H1 (cell line): ENCODE measurements at regions of chr4 and their contacts with region 1.

Region 1: DNA sequence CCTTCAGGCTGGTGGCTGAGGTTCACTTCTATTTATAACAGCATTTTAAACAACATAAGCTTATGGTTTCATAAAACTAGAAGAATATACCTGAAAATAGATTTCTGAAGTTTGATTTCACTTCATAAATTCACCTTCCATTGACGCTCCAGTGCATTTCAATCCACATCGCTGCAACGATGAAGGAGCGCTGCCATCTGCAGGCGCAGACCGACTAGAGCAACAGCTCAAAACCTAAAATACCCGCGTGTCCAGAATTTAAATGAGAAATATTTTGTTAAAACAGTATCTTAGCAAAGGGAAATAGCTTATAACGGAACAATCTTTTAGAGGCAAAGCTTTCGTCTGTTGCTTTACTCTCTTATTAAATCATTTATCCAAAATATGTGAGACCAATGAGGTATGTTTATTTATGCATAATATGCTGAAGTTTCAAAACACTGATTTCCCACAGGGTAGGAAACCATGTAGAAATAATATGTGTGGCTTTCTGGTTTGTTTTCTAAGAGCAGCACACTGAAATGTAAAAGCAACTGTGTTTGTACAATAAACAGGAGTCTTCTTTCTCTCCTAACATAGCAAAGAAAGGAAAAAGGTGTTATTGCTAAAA is 816.4 kb upstream of the FRG1 start:
- DNase-seq: no peak
- H3K4me3 ChIP-seq: no peak overlapping the region
- H3K27ac ChIP-seq: no peak overlapping the region
- H3K4me1 ChIP-seq: no peaks in the 10 kb centered on the region
- H3K27me3 ChIP-seq: no peaks in the 10 kb centered on the region
- CTCF ChIP-seq: peak; percentile 61 to 72 (median 69)
- EP300 ChIP-seq: no peak
- POLR2A ChIP-seq: no peak
- RAD21 ChIP-seq: peak; percentile 89 to 92

Region 2: GRCh38 chr4:188781655-188782054 is 342.6 kb before region 1 on chr4:
- CTCF ChIA-PET with region 1: interaction called, 18 read pairs
- POLR2A ChIA-PET with region 1: no interaction called
- DNase-seq: peak in 1 of 2 experiments; percentile 19
- H3K4me3 ChIP-seq: no peak overlapping the region
- H3K27ac ChIP-seq: no peak overlapping the region
- H3K4me1 ChIP-seq: no peaks in the 10 kb centered on the region
- H3K27me3 ChIP-seq: no peaks in the 10 kb centered on the region
- CTCF ChIP-seq: peak; percentile 56 to 75 (median 70)
- EP300 ChIP-seq: no peak
- POLR2A ChIP-seq: no peak
- RAD21 ChIP-seq: peak; percentile 56 to 65

Region 3: DNA sequence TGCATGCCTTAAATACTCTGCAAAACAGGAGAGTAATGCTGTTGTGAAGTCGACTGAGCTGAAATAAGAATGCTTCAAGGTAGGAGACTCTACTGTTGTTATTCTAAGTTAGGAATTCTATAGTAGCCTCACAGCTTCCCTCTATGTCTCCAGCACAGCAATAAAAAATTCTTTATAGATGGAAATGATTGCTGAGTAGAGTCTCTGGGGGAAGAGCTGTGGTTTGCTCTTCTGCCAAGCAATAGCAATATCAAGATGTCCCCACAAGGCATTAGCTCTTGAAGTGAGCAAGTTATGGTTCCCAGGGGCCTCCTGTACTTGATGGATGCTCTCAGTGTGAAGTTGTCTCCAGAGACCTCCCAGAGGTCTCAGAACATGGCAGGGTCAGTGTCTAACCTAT is 64.2 kb before region 1 on chr4:
- CTCF ChIA-PET with region 1: no interaction called
- POLR2A ChIA-PET with region 1: no interaction called
- DNase-seq: no peak
- H3K4me3 ChIP-seq: no peak overlapping the region
- H3K27ac ChIP-seq: peak overlapping the region; percentile 66; the same call in 1 of the 2 replicates
- H3K4me1 ChIP-seq: peaks cover 10 to 17% (median 13%) of the 10 kb centered on the region in 4 experiments
- H3K27me3 ChIP-seq: no peaks in the 10 kb centered on the region
- CTCF ChIP-seq: no peak
- EP300 ChIP-seq: no peak
- POLR2A ChIP-seq: no peak
- RAD21 ChIP-seq: no peak

Region 4: DNA sequence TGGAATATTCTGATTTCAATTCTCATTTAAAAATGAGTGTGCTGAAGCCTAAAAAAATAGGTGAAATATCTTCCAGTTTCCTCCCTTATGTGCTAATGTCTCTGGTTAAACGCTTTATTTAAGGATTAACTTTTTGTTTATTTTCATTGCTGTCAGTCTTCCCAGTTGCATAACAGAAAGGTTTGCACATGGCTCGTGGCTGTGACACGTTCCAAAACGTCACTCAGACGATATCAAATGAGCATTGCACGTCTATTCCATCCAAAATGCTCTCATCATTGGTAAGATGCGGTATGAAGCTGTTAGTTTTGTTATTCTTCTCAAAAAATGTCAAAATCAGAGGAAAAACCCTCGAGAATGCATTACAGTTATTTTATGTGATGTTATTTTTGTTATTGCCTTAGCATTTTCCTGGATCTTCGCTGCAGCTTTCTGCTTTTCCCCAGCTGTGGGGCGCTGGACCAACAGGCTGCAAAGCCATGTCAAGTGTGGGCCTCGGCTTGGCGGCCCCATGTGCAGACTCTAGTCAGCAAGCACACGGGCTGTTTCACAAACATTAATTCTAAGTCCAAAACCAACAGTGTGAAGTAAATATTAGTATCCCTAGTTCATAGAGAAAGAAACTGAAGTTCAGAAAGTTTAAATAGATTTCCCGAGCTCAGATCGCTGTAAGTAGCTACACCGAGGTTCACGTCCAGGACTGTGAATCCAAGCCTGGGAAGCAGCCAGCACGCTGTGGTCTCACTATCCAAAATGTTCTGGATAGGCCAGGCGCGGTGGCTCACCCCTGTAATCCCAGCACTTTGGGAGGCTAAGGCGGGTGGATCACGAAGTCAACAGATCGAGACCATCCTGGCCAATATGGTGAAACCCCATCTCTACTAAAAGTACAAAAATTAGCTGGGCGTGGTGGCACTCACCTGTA is 23.0 kb after region 1 on chr4:
- CTCF ChIA-PET with region 1: interaction called, 15 read pairs
- POLR2A ChIA-PET with region 1: no interaction called
- DNase-seq: no peak
- H3K4me3 ChIP-seq: no peak overlapping the region
- H3K27ac ChIP-seq: no peak overlapping the region
- H3K4me1 ChIP-seq: no peaks in the 10 kb centered on the region
- H3K27me3 ChIP-seq: no peaks in the 10 kb centered on the region
- CTCF ChIP-seq: no peak
- EP300 ChIP-seq: no peak
- POLR2A ChIP-seq: no peak
- RAD21 ChIP-seq: no peak

Region 5: DNA sequence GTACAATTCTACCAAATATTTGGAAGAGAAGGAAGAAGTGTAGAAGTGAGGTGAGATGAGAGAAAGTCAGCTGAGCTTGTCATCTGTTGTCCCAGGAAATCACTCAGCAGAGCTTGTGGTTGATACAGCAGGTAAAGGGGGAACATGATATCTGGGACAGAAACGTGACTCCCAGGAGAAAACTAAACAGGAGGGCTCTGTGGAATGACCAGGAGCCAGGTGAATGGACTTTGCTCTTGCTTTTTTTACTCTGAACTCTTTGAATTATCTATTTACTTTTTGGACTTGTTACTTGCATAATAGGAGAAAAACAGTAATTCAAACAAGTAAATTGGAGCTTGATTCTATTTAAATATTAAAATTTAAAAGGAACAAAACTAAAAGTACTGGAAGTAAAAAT is 260.8 kb after region 1 on chr4:
- CTCF ChIA-PET with region 1: no interaction called
- POLR2A ChIA-PET with region 1: no interaction called
- DNase-seq: no peak
- H3K4me3 ChIP-seq: no peak overlapping the region
- H3K27ac ChIP-seq: no peak overlapping the region
- H3K4me1 ChIP-seq: no peaks in the 10 kb centered on the region
- H3K27me3 ChIP-seq: no peaks in the 10 kb centered on the region
- CTCF ChIP-seq: no peak
- EP300 ChIP-seq: no peak
- POLR2A ChIP-seq: no peak
- RAD21 ChIP-seq: no peak

Region 6: DNA sequence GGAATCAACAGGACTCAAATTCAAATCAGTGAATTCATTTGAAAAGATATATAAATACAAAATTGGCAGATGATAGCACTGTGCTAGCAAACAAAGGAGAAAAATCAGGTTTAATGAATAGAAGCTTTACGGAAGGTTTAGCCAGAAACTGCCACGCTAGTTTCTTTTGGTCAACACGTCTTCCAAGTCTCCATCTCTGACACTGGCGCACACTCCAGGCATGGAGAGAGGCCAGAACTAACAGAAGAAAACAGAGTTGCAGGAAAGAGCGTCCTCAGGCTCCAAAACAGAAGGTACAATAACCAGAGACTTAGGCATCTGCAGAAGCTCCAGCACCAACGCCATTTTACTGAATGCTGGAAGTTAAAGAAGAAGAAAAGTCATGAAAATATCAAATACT is 319.1 kb after region 1 on chr4:
- CTCF ChIA-PET with region 1: no interaction called
- POLR2A ChIA-PET with region 1: no interaction called
- DNase-seq: no peak
- H3K4me3 ChIP-seq: no peak overlapping the region
- H3K27ac ChIP-seq: no peak overlapping the region
- H3K4me1 ChIP-seq: 0 out of 7 replicates have a peak, but pooled peaks cover 0 to 2% (median 0%) of the 10 kb centered on the region in 4 experiments
- H3K27me3 ChIP-seq: no peaks in the 10 kb centered on the region
- CTCF ChIP-seq: no peak
- EP300 ChIP-seq: no peak
- POLR2A ChIP-seq: no peak
- RAD21 ChIP-seq: no peak